ENCODE measurements at regions of chr2 and their contacts with region 1.

Region 1: GRCh38 chr2:122136056-122136455 is 380.6 kb downstream of the TSN start:
- DNase-seq: no peak
- ATAC-seq: peak in 1 of 4 donors; percentile 39
- H3K4me3 ChIP-seq: no peak overlapping the region
- H3K27ac ChIP-seq: no peak overlapping the region
- H3K4me1 ChIP-seq: no peaks in the 10 kb centered on the region
- H3K27me3 ChIP-seq: no peaks in the 10 kb centered on the region
- CTCF ChIP-seq: peak in 5 of 12 donors; percentile 14 to 63 (median 40)
- POLR2A ChIP-seq: no peak

Region 2: DNA sequence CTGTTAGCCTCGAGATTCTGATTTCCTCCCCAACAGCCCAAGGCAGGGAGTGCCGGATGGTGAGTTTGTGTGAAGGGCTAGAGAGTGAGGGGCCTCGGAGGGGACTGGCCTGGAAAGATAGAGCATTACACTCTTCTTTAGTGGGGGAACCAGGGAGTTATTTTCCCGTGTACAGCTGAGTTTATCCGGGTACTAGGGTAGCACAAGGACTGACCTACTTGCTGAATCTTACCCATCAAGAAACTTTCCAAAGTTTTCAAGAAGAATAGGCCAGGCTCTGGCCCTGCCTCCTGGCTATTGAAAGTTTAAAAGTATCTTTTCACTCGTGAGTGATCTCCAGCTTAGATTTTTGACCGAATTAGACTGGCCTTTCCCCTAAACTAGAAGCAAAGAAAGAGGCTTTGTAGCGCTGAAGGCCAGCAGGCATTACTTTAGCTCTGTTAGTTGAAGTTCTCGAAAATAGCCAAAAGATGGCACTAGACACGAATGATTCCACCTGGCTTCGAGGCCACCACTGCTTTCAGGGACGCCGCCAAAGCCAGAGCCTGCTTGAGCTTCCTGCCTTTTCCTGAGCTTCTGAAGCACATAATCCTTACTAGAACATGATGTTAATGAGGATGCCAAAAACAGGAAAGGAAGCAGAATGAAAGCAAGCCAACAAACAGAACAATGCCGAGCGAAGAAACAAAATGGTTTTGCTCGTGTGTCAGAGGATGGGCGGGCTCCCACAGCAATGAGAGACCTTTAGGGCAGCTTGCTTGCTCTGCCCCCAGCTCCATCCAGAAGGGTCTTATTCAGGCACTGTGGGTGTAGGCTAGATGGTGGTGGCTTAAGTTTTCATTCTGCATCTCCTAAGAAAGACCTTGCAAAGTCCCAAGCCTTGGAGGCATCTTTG is 324.9 kb before region 1 on chr2:
- intact Hi-C with region 1: loop called in 1 of 10 experiments (anchors 2 kb)
- DNase-seq: peak; percentile 64 to 71 (median 70)
- ATAC-seq: peak; percentile 71 to 94 (median 92)
- H3K4me3 ChIP-seq: no peak overlapping the region
- H3K27ac ChIP-seq: peak overlapping the region in 3 of 12 donors; percentile 2 to 43 (median 42)
- H3K4me1 ChIP-seq: peaks cover 0 to 8% (median 0%) of the 10 kb centered on the region in 12 donors
- H3K27me3 ChIP-seq: no peaks in the 10 kb centered on the region
- CTCF ChIP-seq: peak; percentile 36 to 71 (median 62)
- POLR2A ChIP-seq: no peak

Region 3: GRCh38 chr2:122078451-122078850 is 57.6 kb before region 1 on chr2:
- intact Hi-C with region 1: no loop called
- DNase-seq: no peak
- ATAC-seq: no peak
- H3K4me3 ChIP-seq: no peak overlapping the region
- H3K27ac ChIP-seq: no peak overlapping the region
- H3K4me1 ChIP-seq: no peaks in the 10 kb centered on the region
- H3K27me3 ChIP-seq: no peaks in the 10 kb centered on the region
- CTCF ChIP-seq: no peak
- POLR2A ChIP-seq: no peak